HepG2 (cell line): ENCODE measurements at regions of chr17 and their contacts with region 1.

Region 1: DNA sequence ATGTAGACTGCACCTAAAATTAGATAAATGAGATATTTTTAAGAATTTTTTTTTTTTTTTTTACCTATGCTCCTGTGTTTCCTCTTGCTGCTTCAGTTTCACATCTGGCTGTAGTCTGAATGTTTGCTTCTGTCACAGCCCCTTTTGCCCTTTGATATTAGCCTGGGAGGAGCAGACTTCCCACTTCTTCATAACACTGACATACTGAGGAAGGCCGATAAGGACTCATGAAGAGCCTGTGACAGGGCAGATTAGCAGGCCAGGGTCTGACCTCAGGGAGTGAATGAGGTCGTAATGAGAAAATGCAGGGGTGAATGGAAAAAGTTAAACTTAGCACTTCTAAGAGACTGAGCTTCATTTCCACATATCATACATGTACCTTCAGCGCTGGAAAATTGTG is at the start of gene SLFN14:
- DNase-seq: no peak
- ATAC-seq: peak; percentile 43; the same call in 1 of the 3 replicates
- H3K4me3 ChIP-seq: no peak within 1 kb of the TSS
- H3K27ac ChIP-seq: no peak within 1 kb of the TSS
- H3K4me1 ChIP-seq: peaks cover 9% of the 10 kb centered on the region; the same call in 1 of the 2 replicates
- H3K27me3 ChIP-seq: peaks cover 4 to 7% of the 10 kb centered on the region in 2 experiments; a peak in 2 of 5 replicates
- CTCF ChIP-seq: no peak
- EP300 ChIP-seq: no peak
- POLR2A ChIP-seq: no peak
- RAD21 ChIP-seq: no peak
- total RNA-seq, gene SLFN14: not detected in 2 replicates

Region 2: GRCh38 chr17:34961093-34961911 is 599.4 kb before region 1 on chr17 and contains the starts of genes CCT6B and ZNF830:
- CTCF ChIA-PET with region 1: no interaction called
- POLR2A ChIA-PET with region 1: no interaction called
- in situ Hi-C with region 1: no loop called
- intact Hi-C with region 1: loop called (anchors 5 kb)
- DNase-seq: peak; percentile 92
- ATAC-seq: peak; percentile 94
- H3K4me3 ChIP-seq: peak within 1 kb of the TSS; percentile 78 to 92 (median 86)
- H3K27ac ChIP-seq: peak within 1 kb of the TSS; percentile 85
- H3K4me1 ChIP-seq: peaks cover 22% of the 10 kb centered on the region
- H3K27me3 ChIP-seq: no peaks in the 10 kb centered on the region; a peak in 1 of 5 replicates
- CTCF ChIP-seq: 0 out of 2 replicates have a peak, but pooled peaks have one; percentile 14
- EP300 ChIP-seq: no peak
- POLR2A ChIP-seq: peak; percentile 89 to 94
- RAD21 ChIP-seq: no peak
- total RNA-seq, gene CCT6B: 1.1 and 1.4 TPM in 2 replicates
- total RNA-seq, gene ZNF830: 18.9 and 19.0 TPM in 2 replicates